PC-3 (cell line): ENCODE measurements at regions of chr1 and their contacts with region 1.

Region 1: DNA sequence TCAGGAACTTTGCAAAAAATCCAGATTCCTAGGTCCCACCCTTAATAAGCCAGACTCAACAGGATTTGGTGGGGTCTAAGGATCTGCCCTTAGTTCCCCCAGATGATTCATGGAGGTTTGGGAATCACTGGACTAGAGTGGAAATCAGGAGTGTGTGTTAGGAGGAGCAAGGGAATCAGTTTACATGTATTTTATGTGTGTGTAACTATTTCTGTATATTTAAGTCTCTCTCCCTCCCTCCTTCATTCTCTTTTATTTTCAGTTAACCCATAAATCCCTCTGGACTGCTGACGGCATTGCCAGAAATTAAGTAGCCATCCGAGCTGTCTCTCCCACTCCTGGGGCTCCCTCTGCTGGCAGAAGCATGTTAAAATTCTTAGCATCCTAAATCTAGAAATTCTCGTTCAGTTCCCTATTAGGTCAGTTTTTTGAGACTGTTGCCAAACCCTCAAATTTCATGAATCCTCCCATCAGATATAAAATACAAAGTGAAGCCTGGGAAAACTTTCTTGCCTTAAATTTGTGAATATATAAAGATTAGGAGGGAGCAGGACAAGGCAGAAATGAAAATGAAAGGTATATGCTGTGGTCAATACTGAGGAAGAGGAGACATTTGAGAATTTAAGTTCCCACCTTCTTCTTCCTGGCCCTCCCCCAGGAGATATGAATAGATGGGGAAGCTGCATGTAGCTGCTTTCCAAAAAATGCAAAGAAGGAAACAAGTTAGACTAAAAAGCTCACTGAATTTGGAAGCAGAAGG is 11.7 kb upstream of the HSD11B1 start:
- DNase-seq: peak; percentile 97
- ATAC-seq: peak; percentile 81
- H3K4me3 ChIP-seq: no peak overlapping the region
- H3K27ac ChIP-seq: peak overlapping the region; percentile 34
- H3K4me1 ChIP-seq: peaks cover 38% of the 10 kb centered on the region
- H3K27me3 ChIP-seq: no peaks in the 10 kb centered on the region
- CTCF ChIP-seq: peak; percentile 99

Region 2: GRCh38 chr1:209565759-209566678 is 126.9 kb before region 1 on chr1:
- CTCF ChIA-PET with region 1: no interaction called
- POLR2A ChIA-PET with region 1: no interaction called
- intact Hi-C with region 1: loop called (anchors 1 kb)
- DNase-seq: peak; percentile 97
- ATAC-seq: peak; percentile 90
- H3K4me3 ChIP-seq: no peak overlapping the region
- H3K27ac ChIP-seq: no peak overlapping the region
- H3K4me1 ChIP-seq: peaks cover 22% of the 10 kb centered on the region
- H3K27me3 ChIP-seq: no peaks in the 10 kb centered on the region
- CTCF ChIP-seq: peak; percentile 96

Region 3: GRCh38 chr1:209601809-209602657 is 90.9 kb before region 1 on chr1:
- CTCF ChIA-PET with region 1: no interaction called
- POLR2A ChIA-PET with region 1: no interaction called
- intact Hi-C with region 1: loop called (anchors 1 kb)
- DNase-seq: peak; percentile 78
- ATAC-seq: peak; percentile 86
- H3K4me3 ChIP-seq: no peak overlapping the region
- H3K27ac ChIP-seq: no peak overlapping the region
- H3K4me1 ChIP-seq: peaks cover 38% of the 10 kb centered on the region
- H3K27me3 ChIP-seq: no peaks in the 10 kb centered on the region
- CTCF ChIP-seq: peak; percentile 94

Region 4: GRCh38 chr1:209646558-209646957 is 46.4 kb before region 1 on chr1:
- CTCF ChIA-PET with region 1: no interaction called
- POLR2A ChIA-PET with region 1: interaction called, 3 read pairs
- intact Hi-C with region 1: loop called (anchors 1 kb)
- DNase-seq: peak; percentile 56
- ATAC-seq: no peak
- H3K4me3 ChIP-seq: peak overlapping the region; percentile 82
- H3K27ac ChIP-seq: peak overlapping the region; percentile 38
- H3K4me1 ChIP-seq: peaks cover 71% of the 10 kb centered on the region
- H3K27me3 ChIP-seq: no peaks in the 10 kb centered on the region
- CTCF ChIP-seq: peak; percentile 70

Region 5: GRCh38 chr1:209659909-209660308 is 33.0 kb before region 1 on chr1:
- CTCF ChIA-PET with region 1: no interaction called
- POLR2A ChIA-PET with region 1: no interaction called
- intact Hi-C with region 1: no loop called
- DNase-seq: peak; percentile 58
- ATAC-seq: peak; percentile 1; the same call in 1 of the 2 replicates
- H3K4me3 ChIP-seq: no peak overlapping the region
- H3K27ac ChIP-seq: peak overlapping the region; percentile 50
- H3K4me1 ChIP-seq: peaks cover 75% of the 10 kb centered on the region
- H3K27me3 ChIP-seq: no peaks in the 10 kb centered on the region
- CTCF ChIP-seq: no peak

Region 6: GRCh38 chr1:209747580-209748262 is 54.8 kb after region 1 on chr1:
- CTCF ChIA-PET with region 1: no interaction called
- POLR2A ChIA-PET with region 1: no interaction called
- intact Hi-C with region 1: loop called (anchors 1 kb)
- DNase-seq: peak; percentile 99
- ATAC-seq: peak; percentile 99
- H3K4me3 ChIP-seq: no peak overlapping the region
- H3K27ac ChIP-seq: 0 out of 2 replicates have a peak overlapping the region, but pooled peaks have one; percentile 6
- H3K4me1 ChIP-seq: peaks cover 24% of the 10 kb centered on the region
- H3K27me3 ChIP-seq: no peaks in the 10 kb centered on the region
- CTCF ChIP-seq: peak; percentile 97

Region 7: GRCh38 chr1:209797978-209798639 is 105.2 kb after region 1 on chr1:
- CTCF ChIA-PET with region 1: no interaction called
- POLR2A ChIA-PET with region 1: no interaction called
- intact Hi-C with region 1: no loop called
- DNase-seq: peak; percentile 25
- ATAC-seq: 0 out of 2 replicates have a peak, but pooled peaks have one; percentile 24
- H3K4me3 ChIP-seq: no peak overlapping the region
- H3K27ac ChIP-seq: no peak overlapping the region
- H3K4me1 ChIP-seq: no peaks in the 10 kb centered on the region
- H3K27me3 ChIP-seq: no peaks in the 10 kb centered on the region
- CTCF ChIP-seq: peak; percentile 65